Caco-2 (cell line): ENCODE measurements at regions of chr6 and their contacts with region 1.

Region 1: GRCh38 chr6:94052754-94053153 is 633.4 kb upstream of the EPHA7 start:
- DNase-seq: peak in 1 of 2 experiments; percentile 4
- H3K4me3 ChIP-seq: no peak overlapping the region
- H3K4me3 Mint-ChIP-seq: no peak overlapping the region
- H3K27ac Mint-ChIP-seq: no peak overlapping the region
- H3K4me1 ChIP-seq: no peaks in the 10 kb centered on the region
- H3K4me1 Mint-ChIP-seq: no peaks in the 10 kb centered on the region
- H3K27me3 ChIP-seq: no peaks in the 10 kb centered on the region
- H3K27me3 Mint-ChIP-seq: no peaks in the 10 kb centered on the region
- CTCF ChIP-seq: peak in 1 of 2 experiments; percentile 65

Region 2: DNA sequence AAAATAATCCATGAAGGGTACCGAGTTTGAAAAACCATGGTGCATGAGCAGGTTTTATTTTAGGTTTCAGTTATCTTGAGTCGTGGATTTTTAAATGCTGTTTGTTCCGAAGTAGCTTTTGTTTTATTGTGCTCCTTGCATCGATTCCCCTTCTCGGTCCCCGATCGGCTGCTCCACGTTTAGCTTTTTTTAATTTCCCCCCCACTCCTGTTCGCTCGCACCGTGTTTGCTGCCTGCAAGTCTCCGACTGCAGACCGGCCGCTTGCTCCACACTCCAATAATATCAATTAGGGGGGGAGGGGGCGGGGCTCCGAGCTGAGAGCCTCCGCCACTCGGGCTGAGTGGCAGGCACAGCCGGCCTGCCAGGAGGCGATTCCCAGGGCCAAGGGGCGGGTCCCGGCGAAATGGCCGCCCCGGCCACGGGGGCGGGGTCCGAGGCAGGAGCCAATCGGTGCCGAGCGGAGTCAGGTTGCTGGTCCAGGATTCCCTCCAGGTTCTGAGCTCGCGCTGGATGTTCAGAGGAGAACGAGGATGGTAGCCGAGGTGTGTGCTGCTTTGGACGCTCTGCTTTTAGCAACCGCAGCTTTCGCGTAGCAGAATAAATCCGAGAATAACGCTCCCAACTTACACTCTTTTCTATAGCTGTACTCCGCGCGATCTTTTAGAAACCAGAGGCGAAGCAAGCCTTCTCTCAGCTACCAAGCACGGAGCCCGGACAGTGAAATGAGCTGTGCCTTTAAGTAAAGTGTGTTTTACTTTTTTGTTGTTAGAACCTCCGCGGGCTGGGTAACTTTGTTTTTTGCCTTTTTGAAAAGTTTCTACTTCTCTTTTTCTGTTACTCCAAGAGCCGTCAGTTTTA is 633.2 kb before region 1 on chr6 and contains the start of gene EPHA7:
- CTCF ChIA-PET with region 1: no interaction called
- POLR2A ChIA-PET with region 1: no interaction called
- intact Hi-C with region 1: loop called (anchors 5 kb)
- DNase-seq: peak; percentile 87 to 91
- H3K4me3 ChIP-seq: peak within 1 kb of the TSS; percentile 30
- H3K4me3 Mint-ChIP-seq: peak within 1 kb of the TSS; percentile 72
- H3K27ac Mint-ChIP-seq: no peak within 1 kb of the TSS
- H3K4me1 ChIP-seq: peaks cover 18% of the 10 kb centered on the region
- H3K4me1 Mint-ChIP-seq: peaks cover 7% of the 10 kb centered on the region
- H3K27me3 ChIP-seq: peaks cover 3% of the 10 kb centered on the region
- H3K27me3 Mint-ChIP-seq: peaks cover 15% of the 10 kb centered on the region
- CTCF ChIP-seq: no peak
- total RNA-seq, gene EPHA7: not detected in 2 replicates

Region 3: GRCh38 chr6:93721385-93722048 is 331.2 kb before region 1 on chr6:
- CTCF ChIA-PET with region 1: interaction called, 3 read pairs
- POLR2A ChIA-PET with region 1: no interaction called
- intact Hi-C with region 1: loop called (anchors 5 kb)
- DNase-seq: peak in 1 of 2 experiments; percentile 19
- H3K4me3 ChIP-seq: no peak overlapping the region
- H3K4me3 Mint-ChIP-seq: no peak overlapping the region
- H3K27ac Mint-ChIP-seq: no peak overlapping the region
- H3K4me1 ChIP-seq: no peaks in the 10 kb centered on the region
- H3K4me1 Mint-ChIP-seq: no peaks in the 10 kb centered on the region
- H3K27me3 ChIP-seq: no peaks in the 10 kb centered on the region
- H3K27me3 Mint-ChIP-seq: no peaks in the 10 kb centered on the region
- CTCF ChIP-seq: peak in 1 of 2 experiments; percentile 23

Region 4: DNA sequence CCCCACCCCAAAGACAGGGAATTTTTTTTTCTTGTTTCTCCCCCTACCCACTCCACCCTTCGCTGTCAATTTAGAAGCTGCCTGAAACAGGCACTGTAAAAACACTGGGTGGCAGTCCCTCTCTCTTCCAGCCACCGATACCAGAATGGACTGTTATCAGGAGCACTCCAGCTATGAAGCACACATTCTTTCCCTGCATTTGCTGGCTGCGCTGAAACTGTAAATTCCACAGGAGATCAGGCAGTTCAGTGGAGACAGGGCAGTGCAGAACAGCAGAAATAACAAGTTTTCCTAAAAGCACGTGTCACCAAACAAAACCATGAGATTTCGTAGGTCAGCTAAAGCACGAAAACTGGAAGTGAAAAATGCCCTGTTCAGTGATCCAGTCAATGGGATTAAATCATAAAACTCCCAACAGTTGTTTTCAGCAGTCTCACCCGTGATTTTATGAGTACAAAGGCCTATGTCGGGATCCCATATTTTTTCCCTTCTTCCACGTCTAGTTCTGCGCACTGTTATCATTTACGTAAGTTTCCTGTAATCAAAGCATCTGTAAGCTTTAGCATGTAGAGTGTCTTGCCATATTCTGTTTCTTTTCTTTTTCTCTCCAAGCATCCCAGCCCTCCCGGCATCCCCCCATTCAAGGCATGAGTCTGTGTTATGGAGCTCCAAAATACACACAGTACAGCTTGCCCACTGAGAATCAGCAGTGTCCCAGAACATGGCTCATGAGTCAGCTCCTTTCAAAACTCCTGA is 273.5 kb before region 1 on chr6:
- CTCF ChIA-PET with region 1: no interaction called
- POLR2A ChIA-PET with region 1: no interaction called
- intact Hi-C with region 1: loop called (anchors 5 kb)
- DNase-seq: peak in 1 of 2 experiments; percentile 9
- H3K4me3 ChIP-seq: no peak overlapping the region
- H3K4me3 Mint-ChIP-seq: no peak overlapping the region
- H3K27ac Mint-ChIP-seq: no peak overlapping the region
- H3K4me1 ChIP-seq: no peaks in the 10 kb centered on the region
- H3K4me1 Mint-ChIP-seq: no peaks in the 10 kb centered on the region
- H3K27me3 ChIP-seq: no peaks in the 10 kb centered on the region
- H3K27me3 Mint-ChIP-seq: no peaks in the 10 kb centered on the region
- CTCF ChIP-seq: no peak

Region 5: DNA sequence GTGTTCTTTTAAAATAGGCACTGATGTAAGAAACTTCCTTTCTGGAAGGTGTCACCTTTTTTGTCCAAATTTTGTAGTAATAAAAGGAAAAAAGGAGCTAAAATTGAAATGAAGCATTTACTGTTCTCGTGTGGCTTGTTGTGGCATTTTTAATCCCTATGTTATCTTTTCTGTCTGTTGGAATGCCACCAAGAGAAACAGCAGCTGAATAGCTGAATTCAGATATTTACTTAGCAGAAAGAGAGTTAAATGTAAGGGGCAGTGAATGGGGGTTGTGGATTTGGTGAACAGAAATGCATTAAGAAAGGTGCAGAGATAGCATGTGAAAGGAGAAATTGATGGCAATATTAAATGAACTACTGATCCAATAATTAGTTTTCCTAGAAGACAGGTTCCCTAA is 59.8 kb before region 1 on chr6:
- CTCF ChIA-PET with region 1: no interaction called
- POLR2A ChIA-PET with region 1: no interaction called
- intact Hi-C with region 1: no loop called
- DNase-seq: no peak
- H3K4me3 ChIP-seq: no peak overlapping the region
- H3K4me3 Mint-ChIP-seq: no peak overlapping the region
- H3K27ac Mint-ChIP-seq: no peak overlapping the region
- H3K4me1 ChIP-seq: no peaks in the 10 kb centered on the region
- H3K4me1 Mint-ChIP-seq: no peaks in the 10 kb centered on the region
- H3K27me3 ChIP-seq: no peaks in the 10 kb centered on the region
- H3K27me3 Mint-ChIP-seq: no peaks in the 10 kb centered on the region
- CTCF ChIP-seq: no peak